ENCODE measurements at regions of chr15 and their contacts with region 1.

Region 1: GRCh38 chr15:44426975-44427755 is at the start of gene CTDSPL2:
- DNase-seq: peak; percentile 95
- H3K4me3 Mint-ChIP-seq: peak within 1 kb of the TSS; percentile 94
- H3K27ac Mint-ChIP-seq: peak within 1 kb of the TSS; percentile 99
- H3K4me1 Mint-ChIP-seq: peaks cover 35% of the 10 kb centered on the region
- H3K27me3 Mint-ChIP-seq: no peaks in the 10 kb centered on the region
- total RNA-seq, gene CTDSPL2: 66.1 and 69.6 TPM in 2 replicates

Region 2: DNA sequence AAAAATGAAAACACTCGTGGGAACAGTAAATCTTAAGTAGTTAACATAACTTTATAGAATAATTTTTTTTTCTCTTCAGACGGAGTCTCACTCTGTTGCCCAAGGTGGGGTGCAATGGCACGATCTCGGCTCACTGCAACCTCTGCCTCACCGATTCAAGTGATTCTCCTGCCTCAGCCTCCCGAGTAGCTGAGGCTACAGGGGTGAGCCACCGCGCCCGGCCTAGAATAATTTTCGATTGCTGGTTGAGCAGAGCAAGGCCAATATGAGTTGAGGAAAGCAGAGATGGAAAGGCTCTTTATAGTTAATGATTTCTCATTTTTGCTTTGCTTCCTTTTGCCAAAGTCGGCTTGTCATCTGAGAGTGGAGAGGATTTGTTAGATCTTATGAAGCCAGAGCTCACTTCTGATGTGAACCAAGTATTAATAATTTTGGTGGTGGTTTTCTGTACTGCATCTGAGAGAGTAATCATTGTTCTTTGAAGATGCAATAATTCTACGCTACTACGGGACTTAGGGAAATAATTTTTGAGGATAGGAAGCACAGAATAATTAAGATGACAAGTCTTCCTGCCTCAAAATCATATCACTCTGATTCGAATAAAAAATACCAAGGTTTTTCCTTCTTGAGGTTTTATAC is 140.2 kb before region 1 on chr15:
- intact Hi-C with region 1: loop called (anchors 1 kb)
- DNase-seq: no peak
- H3K4me3 Mint-ChIP-seq: peak overlapping the region; percentile 95
- H3K27ac Mint-ChIP-seq: peak overlapping the region; percentile 99
- H3K4me1 Mint-ChIP-seq: peaks cover 30% of the 10 kb centered on the region
- H3K27me3 Mint-ChIP-seq: peaks cover 8% of the 10 kb centered on the region

Region 3: DNA sequence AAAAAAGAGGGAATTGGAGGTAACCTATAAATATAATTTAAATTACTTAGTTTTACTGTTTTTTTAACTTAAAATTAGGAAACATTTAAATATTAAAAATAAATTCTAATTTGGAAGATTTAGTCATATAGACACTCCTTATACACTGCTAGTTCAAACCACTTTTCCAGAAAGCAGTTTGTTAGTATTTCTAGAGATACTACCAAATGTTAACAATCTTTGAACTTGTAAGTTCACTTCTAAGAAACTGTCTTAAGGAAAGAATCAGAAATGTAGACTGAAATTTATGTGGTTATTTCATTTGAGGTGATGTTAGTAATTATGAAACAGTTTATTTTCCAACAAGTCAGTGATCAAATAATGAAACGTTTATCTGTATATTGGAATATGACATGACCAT is 23.0 kb after region 1 on chr15:
- intact Hi-C with region 1: loop called (anchors 2 kb)
- DNase-seq: no peak
- H3K4me3 Mint-ChIP-seq: no peak overlapping the region
- H3K27ac Mint-ChIP-seq: no peak overlapping the region
- H3K4me1 Mint-ChIP-seq: peaks cover 31% of the 10 kb centered on the region
- H3K27me3 Mint-ChIP-seq: no peaks in the 10 kb centered on the region

Region 4: GRCh38 chr15:44468713-44469385 is 41.7 kb after region 1 on chr15:
- intact Hi-C with region 1: loop called (anchors 1 kb)
- DNase-seq: no peak
- H3K4me3 Mint-ChIP-seq: no peak overlapping the region
- H3K27ac Mint-ChIP-seq: peak overlapping the region; percentile 54
- H3K4me1 Mint-ChIP-seq: peaks cover 18% of the 10 kb centered on the region
- H3K27me3 Mint-ChIP-seq: no peaks in the 10 kb centered on the region

Region 5: GRCh38 chr15:44489464-44489863 is 62.3 kb after region 1 on chr15:
- intact Hi-C with region 1: loop called (anchors 5 kb)
- DNase-seq: no peak
- H3K4me3 Mint-ChIP-seq: no peak overlapping the region
- H3K27ac Mint-ChIP-seq: peak overlapping the region; percentile 64
- H3K4me1 Mint-ChIP-seq: peaks cover 27% of the 10 kb centered on the region
- H3K27me3 Mint-ChIP-seq: no peaks in the 10 kb centered on the region

Region 6: DNA sequence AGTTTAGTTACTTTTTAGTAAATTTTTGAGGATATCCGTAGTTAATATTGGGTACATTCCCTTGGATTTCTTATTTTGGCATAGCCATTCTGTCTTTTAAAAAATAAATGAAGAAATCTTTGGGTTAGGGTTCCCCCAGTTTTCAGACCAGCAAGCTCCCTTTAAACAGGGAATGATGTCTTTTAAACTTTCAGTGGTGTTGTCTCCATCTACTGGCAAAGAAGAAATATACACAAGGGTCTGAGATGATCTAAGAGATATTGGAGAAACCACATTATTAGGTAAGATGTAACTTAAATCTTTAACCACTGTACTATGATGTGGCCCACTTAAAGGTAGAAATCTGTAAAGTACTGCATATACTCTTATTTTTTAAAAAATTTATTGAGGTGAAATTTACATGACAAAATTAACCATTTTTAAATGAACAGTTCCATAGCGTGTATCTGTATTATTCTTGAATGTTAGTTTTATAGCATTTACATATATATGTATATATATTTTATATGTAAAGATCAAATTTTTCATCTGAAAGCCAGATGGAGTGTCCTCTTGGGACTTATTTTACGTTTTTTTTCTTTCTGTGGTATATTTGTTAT is 74.7 kb after region 1 on chr15:
- intact Hi-C with region 1: loop called (anchors 1 kb)
- DNase-seq: no peak
- H3K4me3 Mint-ChIP-seq: no peak overlapping the region
- H3K27ac Mint-ChIP-seq: peak overlapping the region; percentile 68
- H3K4me1 Mint-ChIP-seq: peaks cover 23% of the 10 kb centered on the region
- H3K27me3 Mint-ChIP-seq: no peaks in the 10 kb centered on the region

Region 7: GRCh38 chr15:44536962-44537734 is 110.0 kb after region 1 on chr15 and contains the start of gene EIF3J:
- intact Hi-C with region 1: loop called (anchors 1 kb)
- DNase-seq: peak; percentile 96
- H3K4me3 Mint-ChIP-seq: peak within 1 kb of the TSS; percentile 98
- H3K27ac Mint-ChIP-seq: peak within 1 kb of the TSS; percentile 99
- H3K4me1 Mint-ChIP-seq: peaks cover 41% of the 10 kb centered on the region
- H3K27me3 Mint-ChIP-seq: no peaks in the 10 kb centered on the region
- total RNA-seq, gene EIF3J: 127 and 135 TPM in 2 replicates

Measured in activated T-helper 2 cell treated with anti-CD3 and anti-CD28 coated beads, Interferon-gamma antibody, Interleukin-2, Interleukin-4, amounts not matched to agents 10 μg/mL and 5 μg/mL and 100 μg/mL, durations not matched to agents 14 hours and 24 hours and 36 hours (primary cell).